IMR-90 (cell line): ENCODE measurements at regions of chr20 and their contacts with region 1.

Region 1: DNA sequence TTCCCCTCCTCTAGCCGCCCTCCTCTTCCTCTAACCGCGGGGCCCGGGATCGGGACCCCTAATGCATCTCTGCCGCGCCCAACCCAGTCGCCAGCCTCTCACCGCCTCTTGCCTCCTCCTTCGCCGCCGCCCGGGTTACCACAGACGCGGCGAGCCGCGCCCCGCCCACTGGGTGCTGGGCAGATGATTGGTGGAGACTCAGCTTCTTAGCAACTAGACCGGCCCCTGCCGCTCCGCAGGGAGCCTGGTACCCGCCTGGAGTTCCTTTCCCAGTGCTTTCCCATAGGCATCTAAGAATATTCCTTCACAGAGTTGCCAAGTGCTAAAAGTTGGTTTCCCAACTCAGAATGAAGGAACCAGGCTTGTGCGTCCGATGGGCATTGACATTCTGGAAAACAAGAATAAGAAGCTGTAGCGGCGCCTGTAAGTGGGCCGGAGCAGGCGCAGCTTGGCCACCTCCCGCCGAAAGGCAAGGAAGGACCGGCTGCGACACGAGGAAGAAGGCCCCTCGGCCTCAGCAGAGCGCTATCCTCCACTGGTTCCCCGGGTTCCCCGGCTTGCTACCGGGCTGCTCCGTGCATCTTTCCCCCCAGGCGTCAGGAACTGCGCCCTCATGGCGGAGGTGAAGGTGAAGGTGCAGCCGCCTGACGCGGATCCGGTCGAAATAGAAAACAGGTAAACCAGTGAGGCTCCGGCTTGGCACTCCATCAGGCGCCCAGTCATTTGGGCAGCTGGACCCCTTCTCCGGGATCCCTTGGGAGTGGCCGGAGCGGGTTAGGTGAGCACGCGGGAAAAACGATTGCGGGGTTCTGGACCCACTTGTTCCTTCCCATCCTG is at the starts of genes DZANK1 and POLR3F:
- DNase-seq: peak; percentile 94
- ATAC-seq: peak; percentile 100
- H3K4me3 ChIP-seq: peak within 1 kb of the TSS; percentile 75
- H3K27ac ChIP-seq: peak within 1 kb of the TSS; percentile 85
- H3K4me1 ChIP-seq: peaks cover 1% of the 10 kb centered on the region; the same call in 1 of the 2 replicates
- H3K27me3 ChIP-seq: no peaks in the 10 kb centered on the region
- CTCF ChIP-seq: no peak
- POLR2A ChIP-seq: peak; percentile 56; the same call in 1 of the 2 replicates
- RAD21 ChIP-seq: no peak
- total RNA-seq, gene DZANK1: 0.54 and 0.83 TPM in 2 replicates
- total RNA-seq, gene POLR3F: 5.7 and 10.0 TPM in 2 replicates

Region 2: GRCh38 chr20:18304585-18304984 is 162.5 kb before region 1 on chr20:
- CTCF ChIA-PET with region 1: no interaction called
- POLR2A ChIA-PET with region 1: no interaction called
- dilution Hi-C with region 1: no loop called
- in situ Hi-C with region 1: no loop called
- intact Hi-C with region 1: loop called (anchors 10 kb)
- DNase-seq: no peak
- ATAC-seq: no peak
- H3K4me3 ChIP-seq: no peak overlapping the region
- H3K27ac ChIP-seq: no peak overlapping the region
- H3K4me1 ChIP-seq: no peaks in the 10 kb centered on the region
- H3K27me3 ChIP-seq: no peaks in the 10 kb centered on the region
- CTCF ChIP-seq: no peak; the same call in 1 of the 2 replicates
- POLR2A ChIP-seq: no peak
- RAD21 ChIP-seq: no peak

Region 3: DNA sequence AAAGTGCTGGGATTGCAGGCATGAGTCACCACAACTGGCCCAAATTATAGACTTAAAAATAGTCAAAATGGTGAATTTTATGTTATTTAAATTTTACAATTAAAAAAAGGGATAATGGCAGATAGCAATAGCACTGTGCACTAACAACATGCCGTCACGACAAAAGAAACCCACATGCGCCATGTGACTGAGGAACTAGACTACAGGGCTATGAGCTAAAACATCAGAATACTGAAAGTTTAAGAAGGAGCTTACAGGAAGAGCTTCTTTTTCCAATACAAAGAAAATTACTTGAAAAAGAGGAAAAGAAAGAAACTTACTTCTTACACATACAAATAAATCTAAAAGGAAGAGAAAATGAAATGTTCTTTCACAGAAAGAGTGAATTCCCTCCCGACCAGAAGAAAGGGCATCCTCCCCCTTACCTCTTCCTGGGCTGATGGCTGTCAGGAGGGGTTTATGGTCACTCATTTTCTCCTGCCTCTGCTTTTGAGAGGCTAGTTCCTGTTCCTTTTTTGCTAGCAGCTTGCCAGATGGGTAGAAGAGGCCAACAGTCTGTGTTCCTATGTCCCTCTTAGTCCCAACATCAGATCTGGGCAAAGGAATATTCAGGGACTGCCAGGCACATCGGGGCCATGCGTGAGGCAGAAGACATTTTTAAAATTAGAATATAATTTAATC is 54.8 kb before region 1 on chr20:
- CTCF ChIA-PET with region 1: interaction called, 5 read pairs
- POLR2A ChIA-PET with region 1: no interaction called
- dilution Hi-C with region 1: no loop called
- in situ Hi-C with region 1: no loop called
- intact Hi-C with region 1: loop called (anchors 1 kb)
- DNase-seq: no peak
- ATAC-seq: no peak
- H3K4me3 ChIP-seq: no peak overlapping the region
- H3K27ac ChIP-seq: no peak overlapping the region
- H3K4me1 ChIP-seq: no peaks in the 10 kb centered on the region
- H3K27me3 ChIP-seq: no peaks in the 10 kb centered on the region
- CTCF ChIP-seq: no peak
- POLR2A ChIP-seq: no peak
- RAD21 ChIP-seq: no peak

Region 4: DNA sequence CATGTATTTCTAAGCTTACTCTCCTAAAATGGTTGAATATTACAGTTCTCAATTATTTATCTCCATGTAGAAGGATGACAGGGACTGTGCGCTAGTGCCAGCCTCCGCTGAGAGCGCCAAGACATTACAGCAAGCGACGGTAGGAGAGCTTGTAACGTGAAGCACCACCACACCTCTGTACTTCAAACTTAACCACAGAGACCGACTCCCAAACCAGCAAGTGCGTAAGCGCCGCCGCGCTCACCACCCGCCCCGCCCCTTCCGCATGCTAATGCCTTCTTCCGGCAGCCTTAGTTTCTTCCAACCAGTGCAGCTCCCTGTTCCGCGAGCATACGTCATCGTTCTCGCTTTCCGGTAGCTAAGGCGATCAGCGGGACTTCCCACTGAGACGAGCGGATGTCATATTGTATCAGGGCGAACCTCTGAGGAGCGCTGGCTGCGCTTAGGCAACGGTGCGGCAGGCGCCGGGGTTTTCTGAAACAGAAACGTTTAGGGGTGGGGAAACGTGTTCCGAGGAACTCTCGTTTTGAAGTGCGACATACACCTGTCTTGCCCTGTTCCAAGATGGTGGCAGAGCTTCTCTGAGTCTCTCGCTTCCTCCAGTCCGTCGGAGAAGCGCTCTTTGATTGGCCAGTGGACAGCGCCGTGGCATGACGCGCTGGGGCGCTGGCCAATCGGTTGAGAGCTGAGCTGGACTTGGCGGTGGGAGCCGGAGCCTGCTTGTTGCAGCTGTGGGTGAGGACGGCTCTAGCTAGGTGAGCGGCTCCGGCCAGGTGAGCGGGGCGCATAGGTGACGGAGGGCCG is 40.3 kb after region 1 on chr20 and contains the start of gene SEC23B:
- CTCF ChIA-PET with region 1: no interaction called
- POLR2A ChIA-PET with region 1: interaction called, 4 read pairs
- dilution Hi-C with region 1: no loop called
- in situ Hi-C with region 1: no loop called
- intact Hi-C with region 1: loop called (anchors 2 kb)
- DNase-seq: peak; percentile 97
- ATAC-seq: peak; percentile 100
- H3K4me3 ChIP-seq: peak within 1 kb of the TSS; percentile 70
- H3K27ac ChIP-seq: peak within 1 kb of the TSS; percentile 72
- H3K4me1 ChIP-seq: peaks cover 4% of the 10 kb centered on the region; the same call in 1 of the 2 replicates
- H3K27me3 ChIP-seq: no peaks in the 10 kb centered on the region; the same call in 1 of the 2 replicates
- CTCF ChIP-seq: no peak
- POLR2A ChIP-seq: peak; percentile 88
- RAD21 ChIP-seq: no peak
- total RNA-seq, gene SEC23B: 65.0 and 78.9 TPM in 2 replicates